Aorta (tissue), 5 donors: ENCODE measurements at regions of chr9 and their contacts with region 1.

Region 1: DNA sequence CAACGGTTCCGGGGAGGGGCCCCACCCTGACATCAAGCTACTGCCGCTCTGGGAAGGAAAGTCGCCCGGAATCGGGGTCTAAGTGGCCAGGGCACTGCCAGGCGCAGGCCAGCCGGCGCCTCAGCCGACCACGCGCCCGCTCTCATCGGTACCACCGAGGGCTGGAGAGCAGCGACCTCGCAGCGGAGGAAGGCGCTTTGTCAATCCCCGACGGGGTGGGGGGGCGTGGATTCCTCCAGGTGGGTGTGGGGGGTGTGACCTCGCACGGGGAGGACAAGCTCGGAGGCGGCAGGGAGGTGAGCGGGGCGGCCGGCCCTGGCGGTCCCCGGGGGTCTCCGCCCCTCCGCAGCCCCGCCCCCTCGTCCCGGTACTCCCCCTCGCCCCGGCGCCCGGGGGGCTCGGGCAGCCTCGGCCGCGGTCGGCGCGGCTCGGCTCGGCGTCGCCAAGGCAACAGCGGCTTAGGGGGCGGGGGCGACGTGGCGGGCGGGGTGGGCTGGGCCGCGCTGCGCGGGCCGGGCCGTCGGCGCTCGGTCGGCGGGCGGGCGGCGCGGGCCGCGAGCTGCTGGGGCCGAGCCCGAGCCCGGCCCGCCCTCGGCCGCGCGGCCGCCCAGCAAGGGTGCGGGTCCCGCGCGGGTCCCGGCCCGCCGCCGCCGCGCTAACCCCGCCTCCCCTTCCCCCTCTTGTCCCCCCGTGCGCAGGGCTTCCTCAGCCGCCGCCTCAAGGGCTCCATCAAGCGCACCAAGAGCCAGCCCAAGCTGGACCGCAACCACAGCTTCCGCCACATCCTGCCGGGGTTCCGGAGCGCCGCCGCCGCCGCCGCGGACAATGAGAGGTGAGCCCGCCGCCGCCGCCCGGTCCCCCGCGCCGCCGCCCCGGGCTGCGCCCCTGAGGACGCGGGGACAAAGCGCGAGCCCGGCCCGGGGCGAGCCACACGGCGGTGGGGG is 47.5 kb downstream of the DAB2IP start:
- DNase-seq: peak; percentile 74 to 88
- ATAC-seq: peak; percentile 3
- H3K4me3 ChIP-seq: peak overlapping the region; percentile 32 to 59
- H3K27ac ChIP-seq: no peak overlapping the region
- H3K4me1 ChIP-seq: no peaks in the 10 kb centered on the region
- H3K27me3 ChIP-seq: no peaks in the 10 kb centered on the region

Region 2: DNA sequence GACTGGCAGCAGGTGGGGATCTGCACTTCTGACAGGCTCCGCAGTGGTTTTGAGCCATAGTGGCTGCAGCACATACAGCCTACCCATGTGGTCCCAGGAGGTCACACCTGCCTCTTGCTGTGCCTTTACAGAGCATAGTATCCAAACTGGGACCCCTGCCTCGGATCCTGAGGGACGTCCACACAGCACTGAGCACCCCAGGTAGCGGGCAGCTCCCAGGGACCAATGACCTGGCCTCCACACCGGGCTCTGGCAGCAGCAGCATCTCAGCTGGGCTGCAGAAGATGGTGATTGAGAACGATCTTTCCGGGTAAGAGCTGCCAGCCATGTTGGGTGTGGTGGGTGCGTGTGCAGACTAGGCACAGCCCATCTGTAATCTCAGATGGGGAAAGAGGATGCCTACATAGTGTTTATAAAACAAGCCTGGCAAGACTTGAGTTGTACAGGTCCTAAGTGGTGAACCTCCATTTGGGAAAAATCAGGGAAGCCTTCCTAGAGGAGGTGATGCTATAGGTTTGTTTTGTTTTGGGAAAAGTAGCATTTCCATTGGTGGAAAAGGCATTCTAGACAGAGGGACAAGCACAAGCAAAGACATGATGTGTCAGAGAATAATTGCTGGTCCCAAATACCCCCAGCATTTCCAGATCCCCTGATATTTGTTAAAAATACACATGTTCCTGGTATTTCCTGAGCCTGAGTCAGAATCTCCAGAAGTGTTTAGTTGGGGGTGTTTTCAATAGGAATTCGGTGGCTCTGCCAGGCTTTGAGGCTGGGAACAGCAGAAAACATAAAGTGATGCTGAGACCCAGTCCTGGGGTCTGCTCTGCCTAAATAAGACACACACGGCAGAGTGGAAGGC is 71.7 kb after region 1 on chr9:
- intact Hi-C with region 1: loop called in 1 of 2 experiments (anchors 5 kb)
- DNase-seq: peak; percentile 42 to 52
- ATAC-seq: no peak
- H3K4me3 ChIP-seq: no peak overlapping the region
- H3K27ac ChIP-seq: peak overlapping the region; percentile 62 to 93
- H3K4me1 ChIP-seq: no peaks in the 10 kb centered on the region
- H3K27me3 ChIP-seq: no peaks in the 10 kb centered on the region

Region 3: GRCh38 chr9:122029898-122030297 is 331.0 kb after region 1 on chr9:
- intact Hi-C with region 1: no loop called
- DNase-seq: no peak
- ATAC-seq: no peak
- H3K4me3 ChIP-seq: no peak overlapping the region
- H3K27ac ChIP-seq: no peak overlapping the region
- H3K4me1 ChIP-seq: peaks cover 0 to 9% of the 10 kb centered on the region in 2 donors
- H3K27me3 ChIP-seq: no peaks in the 10 kb centered on the region

Region 4: GRCh38 chr9:122389799-122390481 is 691.0 kb after region 1 on chr9:
- intact Hi-C with region 1: no loop called
- DNase-seq: no peak
- ATAC-seq: no peak
- H3K4me3 ChIP-seq: no peak overlapping the region
- H3K27ac ChIP-seq: no peak overlapping the region
- H3K4me1 ChIP-seq: no peaks in the 10 kb centered on the region
- H3K27me3 ChIP-seq: no peaks in the 10 kb centered on the region